Activated B cell treated with CpG ODN at 0.5 μM for 24 hours (primary cell): ENCODE measurements at regions of chr3 and their contacts with region 1.

Region 1: GRCh38 chr3:71258116-71258515 is 325.4 kb downstream of the FOXP1 start:
- DNase-seq: no peak
- ATAC-seq: no peak
- H3K4me3 Mint-ChIP-seq: no peak overlapping the region
- H3K27ac Mint-ChIP-seq: peak overlapping the region; percentile 64
- H3K4me1 Mint-ChIP-seq: peaks cover 61% of the 10 kb centered on the region
- H3K27me3 Mint-ChIP-seq: no peaks in the 10 kb centered on the region
- CTCF ChIP-seq: no peak

Region 2: GRCh38 chr3:71219744-71220638 is 38.1 kb before region 1 on chr3:
- CTCF ChIA-PET with region 1: no interaction called
- POLR2A ChIA-PET with region 1: no interaction called
- intact Hi-C with region 1: no loop called
- DNase-seq: no peak
- ATAC-seq: peak; percentile 98
- H3K4me3 Mint-ChIP-seq: no peak overlapping the region
- H3K27ac Mint-ChIP-seq: peak overlapping the region; percentile 47
- H3K4me1 Mint-ChIP-seq: peaks cover 64% of the 10 kb centered on the region
- H3K27me3 Mint-ChIP-seq: no peaks in the 10 kb centered on the region
- CTCF ChIP-seq: no peak

Region 3: DNA sequence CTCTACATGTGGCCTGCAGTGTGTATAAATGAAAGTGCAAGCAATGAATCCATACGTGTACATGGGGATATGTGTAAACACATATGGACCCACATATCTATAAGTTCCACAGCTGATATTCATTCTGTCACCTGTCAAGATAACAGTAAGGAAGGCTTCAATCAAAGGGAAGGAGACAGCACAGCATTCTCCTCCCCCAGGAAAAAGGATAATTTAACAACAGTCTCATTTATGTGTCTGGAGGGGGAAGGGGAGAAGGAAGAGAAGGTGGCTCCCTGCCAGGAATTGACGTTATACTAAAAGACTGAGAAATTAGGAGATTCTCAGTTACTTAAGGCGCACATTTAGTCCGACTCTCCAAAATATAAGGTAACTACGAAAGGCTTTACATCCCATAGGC is 20.4 kb before region 1 on chr3:
- CTCF ChIA-PET with region 1: interaction called, 3 read pairs
- POLR2A ChIA-PET with region 1: interaction called, 10 read pairs
- intact Hi-C with region 1: no loop called
- DNase-seq: no peak
- ATAC-seq: no peak
- H3K4me3 Mint-ChIP-seq: no peak overlapping the region
- H3K27ac Mint-ChIP-seq: peak overlapping the region; percentile 42
- H3K4me1 Mint-ChIP-seq: peaks cover 61% of the 10 kb centered on the region
- H3K27me3 Mint-ChIP-seq: no peaks in the 10 kb centered on the region
- CTCF ChIP-seq: no peak

Region 4: GRCh38 chr3:71281280-71281679 is 23.2 kb after region 1 on chr3:
- CTCF ChIA-PET with region 1: no interaction called
- POLR2A ChIA-PET with region 1: interaction called, 4 read pairs
- intact Hi-C with region 1: loop called (anchors 2 kb)
- DNase-seq: no peak
- ATAC-seq: no peak
- H3K4me3 Mint-ChIP-seq: no peak overlapping the region
- H3K27ac Mint-ChIP-seq: no peak overlapping the region
- H3K4me1 Mint-ChIP-seq: peaks cover 28% of the 10 kb centered on the region
- H3K27me3 Mint-ChIP-seq: no peaks in the 10 kb centered on the region
- CTCF ChIP-seq: no peak